K562 (cell line): ENCODE measurements at regions of chr2 and their contacts with region 1.

Region 1: GRCh38 chr2:102050854-102051391 is 59.2 kb downstream of the IL1R2 start:
- DNase-seq: peak; percentile 50 to 89 (median 71)
- ATAC-seq: peak; percentile 83
- H3K4me3 ChIP-seq: no peak overlapping the region
- H3K27ac ChIP-seq: peak overlapping the region; percentile 54
- H3K4me1 ChIP-seq: peaks cover 5 to 45% of the 10 kb centered on the region in 2 experiments
- H3K27me3 ChIP-seq: no peaks in the 10 kb centered on the region
- CTCF ChIP-seq: no peak
- EP300 ChIP-seq: peak; percentile 27; the same call in 1 of the 2 replicates
- POLR2A ChIP-seq: no peak
- RAD21 ChIP-seq: no peak

Region 2: GRCh38 chr2:101983928-101984327 is 67.0 kb before region 1 on chr2:
- CTCF ChIA-PET with region 1: no interaction called
- POLR2A ChIA-PET with region 1: no interaction called
- in situ Hi-C with region 1: no loop called
- intact Hi-C with region 1: no loop called
- DNase-seq: no peak
- ATAC-seq: 0 out of 3 replicates have a peak, but pooled peaks have one; percentile 43
- H3K4me3 ChIP-seq: no peak overlapping the region
- H3K27ac ChIP-seq: no peak overlapping the region
- H3K4me1 ChIP-seq: 0 out of 5 replicates have a peak, but pooled peaks cover 0 to 3% of the 10 kb centered on the region in 2 experiments
- H3K27me3 ChIP-seq: peaks cover 25 to 77% of the 10 kb centered on the region in 2 experiments; a peak in 4 of 5 replicates
- CTCF ChIP-seq: peak in 2 of 3 experiments; percentile 12 to 38; a peak in 1 of 6 replicates
- EP300 ChIP-seq: no peak
- POLR2A ChIP-seq: no peak
- RAD21 ChIP-seq: peak; percentile 25 to 50; a peak in 2 of 4 replicates

Region 3: GRCh38 chr2:102033031-102033749 is 17.7 kb before region 1 on chr2:
- CTCF ChIA-PET with region 1: no interaction called
- POLR2A ChIA-PET with region 1: interaction called, 12 read pairs
- in situ Hi-C with region 1: no loop called
- intact Hi-C with region 1: no loop called
- DNase-seq: peak in 1 of 4 experiments; percentile 28
- ATAC-seq: peak; percentile 60
- H3K4me3 ChIP-seq: no peak overlapping the region
- H3K27ac ChIP-seq: no peak overlapping the region
- H3K4me1 ChIP-seq: peaks cover 8 to 21% of the 10 kb centered on the region in 2 experiments; a peak in 4 of 5 replicates
- H3K27me3 ChIP-seq: no peaks in the 10 kb centered on the region
- CTCF ChIP-seq: no peak
- EP300 ChIP-seq: no peak
- POLR2A ChIP-seq: no peak
- RAD21 ChIP-seq: no peak

Region 4: DNA sequence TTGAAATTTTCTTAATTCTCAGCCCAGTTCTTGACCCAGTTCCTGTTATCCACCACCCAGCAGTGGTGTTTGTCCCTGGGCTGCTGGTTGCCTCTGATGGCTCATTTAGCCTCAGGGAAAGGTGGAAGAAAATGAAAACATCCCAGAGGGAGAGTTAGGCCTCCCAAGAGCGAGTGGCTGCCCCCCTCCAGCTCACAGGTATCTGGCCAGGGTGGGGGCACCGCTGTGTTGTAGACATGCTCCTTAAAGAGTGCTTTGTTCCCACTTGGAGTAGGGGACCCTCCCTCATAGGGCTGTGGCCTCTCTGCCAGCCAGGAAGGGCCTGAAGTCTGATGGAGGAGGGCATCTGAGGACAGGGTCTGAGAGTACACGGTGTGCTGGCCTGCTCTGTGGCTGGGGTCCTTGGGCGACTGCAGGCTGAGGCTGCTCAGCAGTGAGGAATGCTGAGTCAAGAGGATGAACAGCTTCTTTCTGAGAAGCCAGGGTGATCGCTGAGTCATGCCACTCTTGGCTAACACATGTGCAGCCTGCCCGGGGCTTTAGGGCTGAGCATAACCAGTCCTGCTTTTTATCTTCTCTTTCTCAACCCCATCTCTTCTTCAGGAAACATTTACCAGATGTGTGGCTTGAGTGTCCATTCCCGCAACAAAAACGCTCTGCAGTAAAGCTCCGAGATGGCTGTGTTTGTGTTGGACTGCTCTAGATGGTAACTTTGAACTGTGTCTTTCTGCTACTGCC is 13.2 kb after region 1 on chr2:
- CTCF ChIA-PET with region 1: no interaction called
- POLR2A ChIA-PET with region 1: interaction called, 18 read pairs
- in situ Hi-C with region 1: no loop called
- intact Hi-C with region 1: no loop called
- DNase-seq: peak; percentile 87 to 95 (median 90)
- ATAC-seq: peak; percentile 90
- H3K4me3 ChIP-seq: no peak overlapping the region
- H3K27ac ChIP-seq: peak overlapping the region; percentile 84
- H3K4me1 ChIP-seq: peaks cover 38 to 54% of the 10 kb centered on the region in 2 experiments
- H3K27me3 ChIP-seq: no peaks in the 10 kb centered on the region
- CTCF ChIP-seq: no peak
- EP300 ChIP-seq: peak; percentile 71; the same call in 1 of the 2 replicates
- POLR2A ChIP-seq: peak; percentile 65
- RAD21 ChIP-seq: 0 out of 4 replicates have a peak, but pooled peaks of 1 of the 2 experiments have one; percentile 29